ENCODE measurements at regions of chr3 and their contacts with region 1.

Region 1: GRCh38 chr3:142586803-142587406 is 8.4 kb upstream of the ATR start:
- DNase-seq: no peak
- ATAC-seq: peak; percentile 77 to 78
- H3K4me3 ChIP-seq: no peak overlapping the region
- H3K27ac ChIP-seq: no peak overlapping the region
- H3K4me1 ChIP-seq: no peaks in the 10 kb centered on the region
- H3K27me3 ChIP-seq: no peaks in the 10 kb centered on the region

Region 2: DNA sequence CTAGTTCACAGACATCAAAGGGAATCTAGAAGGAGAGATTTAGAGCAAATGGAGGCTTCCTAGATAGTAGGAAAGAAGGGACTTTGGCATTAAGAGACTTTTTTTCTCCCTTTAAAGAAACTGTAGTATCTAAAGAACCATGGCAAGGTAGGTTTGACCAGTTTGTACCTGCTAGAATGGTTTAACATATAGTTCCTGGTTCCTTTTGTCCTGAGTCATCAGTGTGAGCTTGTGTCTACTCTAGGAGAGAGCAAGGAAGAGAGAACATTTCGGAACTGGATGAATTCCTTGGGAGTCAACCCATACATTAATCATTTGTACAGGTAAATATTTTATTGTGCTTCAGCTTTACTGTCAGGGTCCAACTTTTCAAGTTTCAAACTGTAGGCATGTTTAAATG is 107.3 kb after region 1 on chr3:
- intact Hi-C with region 1: no loop called
- DNase-seq: no peak
- ATAC-seq: no peak
- H3K4me3 ChIP-seq: no peak overlapping the region
- H3K27ac ChIP-seq: no peak overlapping the region
- H3K4me1 ChIP-seq: no peaks in the 10 kb centered on the region
- H3K27me3 ChIP-seq: no peaks in the 10 kb centered on the region

Region 3: GRCh38 chr3:143016321-143016972 is 429.5 kb after region 1 on chr3:
- intact Hi-C with region 1: loop called in 1 of 4 experiments (anchors 10 kb)
- DNase-seq: no peak
- ATAC-seq: no peak
- H3K4me3 ChIP-seq: no peak overlapping the region
- H3K27ac ChIP-seq: no peak overlapping the region
- H3K4me1 ChIP-seq: peaks cover 1% of the 10 kb centered on the region
- H3K27me3 ChIP-seq: no peaks in the 10 kb centered on the region

Measured in right cardiac atrium (tissue), 5 donors.